HEK293 (cell line): ENCODE measurements at regions of chr13 and their contacts with region 1.

Region 1: GRCh38 chr13:38657191-38657590 is 29.7 kb upstream of the FREM2 start:
- H3K4me3 ChIP-seq: no peak overlapping the region
- H3K27ac ChIP-seq: no peak overlapping the region
- H3K4me1 ChIP-seq: peaks cover 4% of the 10 kb centered on the region
- CTCF ChIP-seq: no peak

Region 2: DNA sequence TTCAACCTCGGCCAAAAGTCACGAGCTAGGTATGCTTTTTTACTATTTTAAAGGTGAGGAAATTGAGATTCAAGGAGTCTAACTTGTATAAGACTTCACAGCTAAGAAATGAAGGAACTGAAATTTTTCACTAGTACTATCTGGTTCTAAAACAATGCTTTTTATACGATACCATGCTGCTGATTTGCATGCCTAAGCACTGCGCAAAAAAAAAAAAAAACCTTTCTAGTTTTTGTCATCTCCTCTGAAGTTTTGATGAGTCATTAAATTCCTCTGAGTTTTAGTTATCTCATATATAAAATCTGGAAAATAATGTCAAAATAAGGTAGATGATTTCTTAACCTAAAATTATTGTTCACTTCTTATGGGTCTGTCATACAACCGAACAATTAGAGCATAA is 335.5 kb before region 1 on chr13:
- CTCF ChIA-PET with region 1: no interaction called
- POLR2A ChIA-PET with region 1: no interaction called
- H3K4me3 ChIP-seq: no peak overlapping the region
- H3K27ac ChIP-seq: no peak overlapping the region
- H3K4me1 ChIP-seq: no peaks in the 10 kb centered on the region
- CTCF ChIP-seq: no peak

Region 3: GRCh38 chr13:38635018-38635417 is 22.2 kb before region 1 on chr13:
- CTCF ChIA-PET with region 1: interaction called, 10 read pairs
- POLR2A ChIA-PET with region 1: no interaction called
- H3K4me3 ChIP-seq: no peak overlapping the region
- H3K27ac ChIP-seq: no peak overlapping the region
- H3K4me1 ChIP-seq: peaks cover 2% of the 10 kb centered on the region; the same call in 1 of the 2 replicates
- CTCF ChIP-seq: peak; percentile 8; the same call in 1 of the 2 replicates